ENCODE measurements at regions of chrX and their contacts with region 1.

Region 1: GRCh38 chrX:49191033-49191871 is 5.1 kb upstream of the PRICKLE3 start:
- DNase-seq: peak; percentile 98
- ATAC-seq: peak; percentile 95
- H3K4me3 ChIP-seq: peak overlapping the region; percentile 64 to 80 (median 78); a peak in 5 of 6 replicates
- H3K27ac ChIP-seq: peak overlapping the region; percentile 84
- H3K4me1 ChIP-seq: peaks cover 60% of the 10 kb centered on the region
- H3K27me3 ChIP-seq: no peaks in the 10 kb centered on the region
- CTCF ChIP-seq: no peak
- EP300 ChIP-seq: no peak
- POLR2A ChIP-seq: peak in 1 of 2 experiments; percentile 76; a peak in 2 of 4 replicates
- RAD21 ChIP-seq: no peak

Region 2: DNA sequence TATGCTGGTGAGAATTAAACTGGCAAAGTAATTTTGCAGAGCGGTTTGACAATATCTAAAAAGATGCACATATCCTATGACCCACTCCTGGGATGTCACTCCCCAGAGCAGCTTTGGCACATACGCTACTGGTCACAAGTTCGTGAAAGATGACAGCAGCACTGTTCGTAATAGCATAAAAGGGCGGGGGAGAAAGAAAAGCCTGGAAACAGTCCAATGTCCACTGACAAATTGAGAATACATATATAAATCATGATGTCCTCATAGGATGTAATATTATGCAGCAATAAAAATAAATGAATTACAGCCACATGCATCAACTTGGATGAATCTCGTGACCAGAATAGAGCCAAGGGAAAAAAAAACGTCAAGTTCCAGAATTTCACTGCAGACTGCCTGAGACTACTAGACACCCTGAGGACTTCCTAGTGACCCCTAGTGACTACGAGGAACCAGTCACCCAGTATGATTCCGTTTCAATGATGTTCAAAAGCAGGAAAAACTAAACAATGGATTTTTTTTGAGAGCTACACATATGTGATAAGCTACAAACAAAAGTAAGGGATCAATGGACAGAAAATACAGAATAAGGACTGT is 357.6 kb before region 1 on chrX:
- CTCF ChIA-PET with region 1: no interaction called
- POLR2A ChIA-PET with region 1: no interaction called
- in situ Hi-C with region 1: no loop called
- intact Hi-C with region 1: no loop called
- DNase-seq: peak; percentile 10
- ATAC-seq: peak; percentile 25; the same call in 2 of the 3 replicates
- H3K4me3 ChIP-seq: peak overlapping the region in 1 of 3 experiments; percentile 81; a peak in 2 of 6 replicates
- H3K27ac ChIP-seq: no peak overlapping the region
- H3K4me1 ChIP-seq: peaks cover 32% of the 10 kb centered on the region
- H3K27me3 ChIP-seq: no peaks in the 10 kb centered on the region
- CTCF ChIP-seq: peak; percentile 40
- EP300 ChIP-seq: no peak
- POLR2A ChIP-seq: no peak
- RAD21 ChIP-seq: no peak

Region 3: GRCh38 chrX:49120099-49120498 is 71.2 kb before region 1 on chrX:
- CTCF ChIA-PET with region 1: interaction called, 3 read pairs
- POLR2A ChIA-PET with region 1: interaction called, 3 read pairs
- in situ Hi-C with region 1: loop called (anchors 5 kb)
- intact Hi-C with region 1: no loop called
- DNase-seq: no peak
- ATAC-seq: no peak
- H3K4me3 ChIP-seq: no peak overlapping the region
- H3K27ac ChIP-seq: no peak overlapping the region
- H3K4me1 ChIP-seq: peaks cover 17% of the 10 kb centered on the region
- H3K27me3 ChIP-seq: no peaks in the 10 kb centered on the region
- CTCF ChIP-seq: peak; percentile 29; the same call in 1 of the 2 replicates
- EP300 ChIP-seq: no peak
- POLR2A ChIP-seq: no peak
- RAD21 ChIP-seq: no peak

Region 4: GRCh38 chrX:49155243-49155899 is 35.9 kb before region 1 on chrX:
- CTCF ChIA-PET with region 1: no interaction called
- POLR2A ChIA-PET with region 1: no interaction called
- in situ Hi-C with region 1: no loop called
- intact Hi-C with region 1: no loop called
- DNase-seq: no peak
- ATAC-seq: no peak
- H3K4me3 ChIP-seq: no peak overlapping the region
- H3K27ac ChIP-seq: no peak overlapping the region
- H3K4me1 ChIP-seq: no peaks in the 10 kb centered on the region
- H3K27me3 ChIP-seq: no peaks in the 10 kb centered on the region
- CTCF ChIP-seq: no peak
- EP300 ChIP-seq: no peak
- POLR2A ChIP-seq: no peak
- RAD21 ChIP-seq: no peak

Region 5: DNA sequence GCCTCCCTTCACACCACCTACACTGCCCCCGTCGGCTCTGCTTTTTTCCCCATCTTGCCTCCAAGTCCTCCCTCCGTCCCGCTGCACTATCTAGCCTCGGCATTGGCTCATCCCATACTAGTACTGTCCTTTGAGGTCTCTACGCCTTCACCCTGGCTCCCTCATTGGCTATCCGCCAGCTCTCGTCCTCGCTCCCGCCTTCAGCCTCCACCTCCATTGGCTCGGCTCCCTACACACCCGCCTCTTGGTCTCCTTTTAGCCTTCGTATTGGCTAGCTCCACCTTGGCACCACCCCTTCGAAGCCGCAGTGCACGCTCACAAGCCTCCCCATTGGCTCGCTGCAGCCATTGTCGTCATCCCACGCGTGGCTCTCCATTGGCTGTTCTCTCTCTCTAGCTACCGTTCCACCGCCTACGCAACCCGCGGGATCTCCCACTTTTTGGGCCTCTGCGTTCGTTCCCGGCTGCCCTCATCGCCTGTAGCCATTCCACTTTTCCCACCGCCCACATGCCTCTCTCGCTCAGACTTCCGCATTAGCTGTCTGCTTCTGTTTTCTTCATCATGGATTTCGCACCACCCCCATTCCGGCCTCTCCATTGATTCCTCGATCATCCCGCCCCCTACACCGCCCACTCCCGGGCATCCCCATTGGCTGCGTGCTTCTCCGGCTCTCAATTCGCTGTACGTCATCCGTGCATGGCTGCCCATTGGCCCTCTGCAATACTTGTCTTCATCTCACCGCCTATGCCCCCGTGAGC is 77.9 kb after region 1 on chrX:
- CTCF ChIA-PET with region 1: no interaction called
- POLR2A ChIA-PET with region 1: interaction called, 21 read pairs
- in situ Hi-C with region 1: no loop called
- intact Hi-C with region 1: loop called (anchors 5 kb)
- DNase-seq: peak; percentile 94
- ATAC-seq: peak; percentile 94
- H3K4me3 ChIP-seq: peak overlapping the region; percentile 57 to 82 (median 71); a peak in 5 of 6 replicates
- H3K27ac ChIP-seq: peak overlapping the region; percentile 91
- H3K4me1 ChIP-seq: peaks cover 43% of the 10 kb centered on the region
- H3K27me3 ChIP-seq: no peaks in the 10 kb centered on the region; a peak in 1 of 5 replicates
- CTCF ChIP-seq: no peak
- EP300 ChIP-seq: no peak
- POLR2A ChIP-seq: peak in 1 of 2 experiments; percentile 60; a peak in 2 of 4 replicates
- RAD21 ChIP-seq: no peak

Measured in HepG2 (cell line).